Panc1 (cell line): ENCODE measurements at regions of chr2 and their contacts with region 1.

Region 1: GRCh38 chr2:218466016-218466521 is 47.1 kb downstream of the VIL1 start:
- DNase-seq: peak; percentile 20
- ATAC-seq: peak; percentile 58
- H3K4me3 ChIP-seq: no peak overlapping the region
- H3K27ac ChIP-seq: no peak overlapping the region
- H3K4me1 ChIP-seq: no peaks in the 10 kb centered on the region
- H3K27me3 ChIP-seq: no peaks in the 10 kb centered on the region
- CTCF ChIP-seq: peak; percentile 59; the same call in 1 of the 2 replicates

Region 2: GRCh38 chr2:217789003-217789735 is 676.9 kb before region 1 on chr2:
- CTCF ChIA-PET with region 1: no interaction called
- POLR2A ChIA-PET with region 1: no interaction called
- in situ Hi-C with region 1: no loop called
- intact Hi-C with region 1: no loop called
- DNase-seq: peak; percentile 50
- ATAC-seq: peak; percentile 72
- H3K4me3 ChIP-seq: no peak overlapping the region
- H3K27ac ChIP-seq: no peak overlapping the region
- H3K4me1 ChIP-seq: no peaks in the 10 kb centered on the region
- H3K27me3 ChIP-seq: no peaks in the 10 kb centered on the region
- CTCF ChIP-seq: peak; percentile 98

Region 3: GRCh38 chr2:218269899-218270720 is 196.0 kb before region 1 on chr2 and contains the starts of genes AAMP and PNKD:
- CTCF ChIA-PET with region 1: no interaction called
- POLR2A ChIA-PET with region 1: interaction called, 15 read pairs
- in situ Hi-C with region 1: no loop called
- intact Hi-C with region 1: no loop called
- DNase-seq: peak; percentile 94
- ATAC-seq: peak; percentile 94
- H3K4me3 ChIP-seq: peak within 1 kb of the TSS; percentile 86 to 93
- H3K27ac ChIP-seq: peak within 1 kb of the TSS; percentile 89
- H3K4me1 ChIP-seq: peaks cover 20% of the 10 kb centered on the region
- H3K27me3 ChIP-seq: no peaks in the 10 kb centered on the region
- CTCF ChIP-seq: no peak
- total RNA-seq, gene AAMP: 103 TPM
- total RNA-seq, gene PNKD: 49.0 TPM

Region 4: DNA sequence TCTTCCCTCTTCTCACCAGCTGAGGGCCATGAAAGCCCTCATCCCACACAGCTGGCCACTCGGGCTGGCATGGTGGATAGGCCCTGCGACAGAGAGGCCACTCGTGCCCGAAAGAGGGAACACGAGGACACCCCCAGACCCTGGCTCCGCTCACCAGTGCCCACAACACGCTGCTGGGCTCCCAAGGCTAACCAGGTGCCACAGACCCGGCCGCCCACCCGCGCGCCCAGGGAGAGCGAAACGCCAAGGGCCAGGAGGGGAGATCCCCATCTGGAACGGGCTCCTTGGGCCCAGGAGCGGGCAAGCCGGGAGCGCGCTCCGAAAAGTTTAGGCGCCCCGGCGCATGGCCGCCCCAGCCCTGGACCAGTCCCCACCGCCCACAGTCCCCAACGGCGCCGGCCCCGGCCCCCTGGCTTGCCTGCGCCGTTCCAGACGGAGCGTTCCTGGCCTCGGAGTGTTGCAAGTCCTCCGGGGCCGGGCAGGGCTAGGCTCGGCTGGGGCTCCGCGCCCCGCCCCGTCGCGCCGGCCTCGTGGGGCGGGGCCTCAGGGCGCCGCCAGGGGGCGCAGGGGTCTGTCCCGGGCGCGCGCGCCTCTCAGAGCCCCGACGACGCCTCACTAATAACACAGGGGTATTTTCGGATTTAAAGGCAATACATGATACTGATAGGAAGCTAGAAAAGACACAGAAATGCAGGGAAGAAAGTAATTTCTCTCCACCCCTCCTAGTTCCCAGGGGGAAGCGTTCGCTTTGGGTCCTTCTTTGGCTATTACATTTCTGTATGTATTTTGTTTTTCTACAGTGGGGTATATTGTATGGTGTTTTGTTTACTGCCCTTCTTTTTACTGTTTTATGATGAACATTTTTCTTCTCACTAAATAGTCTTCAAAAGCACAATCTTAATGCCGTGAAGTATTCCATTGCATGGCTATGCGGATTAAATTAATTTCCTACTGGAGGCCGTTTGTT is 173.7 kb before region 1 on chr2 and contains the start of gene TMBIM1:
- CTCF ChIA-PET with region 1: no interaction called
- POLR2A ChIA-PET with region 1: no interaction called
- in situ Hi-C with region 1: no loop called
- intact Hi-C with region 1: loop called (anchors 10 kb)
- DNase-seq: no peak
- ATAC-seq: peak; percentile 94
- H3K4me3 ChIP-seq: peak within 1 kb of the TSS; percentile 69 to 80
- H3K27ac ChIP-seq: peak within 1 kb of the TSS; percentile 88
- H3K4me1 ChIP-seq: peaks cover 42% of the 10 kb centered on the region
- H3K27me3 ChIP-seq: no peaks in the 10 kb centered on the region
- CTCF ChIP-seq: peak; percentile 99
- total RNA-seq, gene TMBIM1: 114 TPM

Region 5: GRCh38 chr2:218344090-218344754 is 121.8 kb before region 1 on chr2:
- CTCF ChIA-PET with region 1: no interaction called
- POLR2A ChIA-PET with region 1: no interaction called
- in situ Hi-C with region 1: no loop called
- intact Hi-C with region 1: no loop called
- DNase-seq: no peak
- ATAC-seq: peak; percentile 46; the same call in 1 of the 2 replicates
- H3K4me3 ChIP-seq: no peak overlapping the region
- H3K27ac ChIP-seq: no peak overlapping the region
- H3K4me1 ChIP-seq: peaks cover 3% of the 10 kb centered on the region; the same call in 1 of the 2 replicates
- H3K27me3 ChIP-seq: no peaks in the 10 kb centered on the region
- CTCF ChIP-seq: no peak

Region 6: DNA sequence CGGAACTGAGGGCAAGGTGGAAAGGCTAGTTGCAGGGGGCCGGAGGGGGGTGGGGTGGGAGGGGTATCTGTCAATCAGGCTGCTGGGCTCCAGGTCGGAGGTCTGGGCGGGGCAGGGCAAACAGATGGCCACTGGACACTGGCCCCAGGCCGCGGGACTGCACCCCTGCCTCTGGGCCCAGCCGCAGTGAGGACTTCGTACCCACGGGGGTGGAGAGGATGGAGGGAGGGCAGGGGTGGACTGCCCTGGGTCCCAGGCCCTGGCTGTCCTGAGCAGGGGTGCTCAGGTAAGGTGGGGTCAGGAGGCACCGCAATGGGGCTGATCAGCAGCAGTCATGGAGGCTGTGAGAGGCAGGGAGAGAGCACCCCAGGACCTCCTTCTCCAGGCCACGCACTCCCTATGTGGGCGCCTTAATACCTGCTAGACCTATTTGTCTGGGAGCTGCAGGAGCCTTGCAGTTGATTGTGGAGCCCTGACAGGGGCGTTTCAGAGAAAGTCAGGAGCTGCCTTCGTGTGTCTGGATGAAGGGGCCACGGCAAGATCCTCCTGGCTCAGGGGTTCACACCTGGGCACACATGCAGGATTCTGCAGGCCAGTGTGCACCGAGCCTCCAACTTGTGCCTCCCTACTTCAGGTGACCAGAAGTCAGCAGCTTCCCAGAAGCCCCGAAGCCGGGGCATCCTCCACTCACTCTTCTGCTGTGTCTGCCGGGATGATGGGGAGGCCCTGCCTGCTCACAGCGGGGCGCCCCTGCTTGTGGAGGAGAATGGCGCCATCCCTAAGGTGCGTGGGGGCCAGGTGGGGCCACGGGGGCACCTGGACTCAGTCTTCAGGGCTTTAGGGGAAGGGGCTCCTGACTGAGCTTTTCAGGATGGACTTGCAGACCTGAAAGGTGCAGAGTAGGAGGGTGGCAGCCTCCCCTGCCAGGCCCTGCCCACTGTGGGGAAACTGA is 64.9 kb before region 1 on chr2:
- CTCF ChIA-PET with region 1: interaction called, 11 read pairs
- POLR2A ChIA-PET with region 1: no interaction called
- in situ Hi-C with region 1: no loop called
- intact Hi-C with region 1: loop called (anchors 5 kb)
- DNase-seq: no peak
- ATAC-seq: no peak
- H3K4me3 ChIP-seq: peak overlapping the region; percentile 76 to 78
- H3K27ac ChIP-seq: peak overlapping the region; percentile 81
- H3K4me1 ChIP-seq: peaks cover 61% of the 10 kb centered on the region
- H3K27me3 ChIP-seq: no peaks in the 10 kb centered on the region
- CTCF ChIP-seq: no peak

Region 7: GRCh38 chr2:218406209-218406948 is 59.7 kb before region 1 on chr2:
- CTCF ChIA-PET with region 1: interaction called, 11 read pairs
- POLR2A ChIA-PET with region 1: interaction called, 5 read pairs
- in situ Hi-C with region 1: no loop called
- intact Hi-C with region 1: loop called (anchors 5 kb)
- DNase-seq: no peak
- ATAC-seq: peak; percentile 89
- H3K4me3 ChIP-seq: peak overlapping the region; percentile 36 to 61
- H3K27ac ChIP-seq: peak overlapping the region; percentile 95
- H3K4me1 ChIP-seq: peaks cover 51% of the 10 kb centered on the region
- H3K27me3 ChIP-seq: no peaks in the 10 kb centered on the region
- CTCF ChIP-seq: peak; percentile 93